ENCODE measurements at regions of chr10 and their contacts with region 1.

Region 1: DNA sequence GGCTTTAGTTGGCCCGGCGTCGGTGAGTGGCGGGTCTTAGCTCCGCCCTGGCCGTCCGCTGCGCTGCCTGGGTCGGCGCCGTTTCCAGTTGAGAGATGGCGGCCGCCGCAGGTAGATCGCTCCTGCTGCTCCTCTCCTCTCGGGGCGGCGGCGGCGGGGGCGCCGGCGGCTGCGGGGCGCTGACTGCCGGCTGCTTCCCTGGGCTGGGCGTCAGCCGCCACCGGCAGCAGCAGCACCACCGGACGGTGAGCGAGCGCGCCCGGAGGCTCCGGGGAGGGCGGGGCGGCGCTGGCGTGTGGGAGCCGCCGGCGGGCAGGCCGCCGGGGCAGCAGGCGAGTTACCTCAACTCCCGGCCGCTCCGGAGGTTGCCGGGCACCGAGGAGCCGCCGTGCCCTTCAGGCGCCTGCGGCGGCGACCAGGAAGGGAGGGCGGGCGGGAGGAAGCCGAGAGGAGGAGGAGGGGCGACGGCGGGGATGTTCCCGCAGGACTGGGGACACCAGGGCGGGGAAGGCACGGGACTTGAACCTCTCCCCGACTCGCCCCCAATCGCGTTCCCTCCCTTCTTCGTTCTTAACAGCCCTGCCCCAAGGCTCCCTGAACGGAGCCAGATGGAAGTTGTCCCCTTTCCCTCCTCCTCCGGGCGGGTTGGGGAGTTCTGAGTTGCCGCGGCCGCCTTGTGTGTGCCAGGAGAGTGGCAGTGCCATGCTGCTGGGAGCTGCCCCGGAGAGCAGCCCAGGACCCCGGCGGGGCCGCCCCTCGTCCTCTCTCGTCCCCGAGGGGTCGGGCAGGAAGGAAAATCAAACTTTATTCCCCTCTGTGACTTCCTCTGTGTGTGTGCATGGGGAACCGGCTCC is at the start of gene MCU:
- DNase-seq: no peak
- ATAC-seq: peak; percentile 98
- H3K4me3 ChIP-seq: peak within 1 kb of the TSS; percentile 82 to 87
- H3K27ac ChIP-seq: peak within 1 kb of the TSS; percentile 66; the same call in 1 of the 2 replicates
- H3K4me1 ChIP-seq: peaks cover 3 to 24% of the 10 kb centered on the region in 2 experiments; a peak in 3 of 4 replicates
- H3K27me3 ChIP-seq: no peaks in the 10 kb centered on the region
- CTCF ChIP-seq: no peak
- POLR2A ChIP-seq: peak; percentile 68
- RAD21 ChIP-seq: no peak
- total RNA-seq, gene MCU: 26.8 TPM

Region 2: GRCh38 chr10:71817831-71818655 is 874.2 kb before region 1 on chr10:
- CTCF ChIA-PET with region 1: no interaction called
- POLR2A ChIA-PET with region 1: no interaction called
- RAD21 ChIA-PET with region 1: no interaction called
- intact Hi-C with region 1: no loop called
- DNase-seq: no peak
- ATAC-seq: no peak
- H3K4me3 ChIP-seq: no peak overlapping the region
- H3K27ac ChIP-seq: no peak overlapping the region
- H3K4me1 ChIP-seq: no peaks in the 10 kb centered on the region; a peak in 1 of 4 replicates
- H3K27me3 ChIP-seq: no peaks in the 10 kb centered on the region
- CTCF ChIP-seq: no peak
- POLR2A ChIP-seq: no peak
- RAD21 ChIP-seq: no peak

Region 3: DNA sequence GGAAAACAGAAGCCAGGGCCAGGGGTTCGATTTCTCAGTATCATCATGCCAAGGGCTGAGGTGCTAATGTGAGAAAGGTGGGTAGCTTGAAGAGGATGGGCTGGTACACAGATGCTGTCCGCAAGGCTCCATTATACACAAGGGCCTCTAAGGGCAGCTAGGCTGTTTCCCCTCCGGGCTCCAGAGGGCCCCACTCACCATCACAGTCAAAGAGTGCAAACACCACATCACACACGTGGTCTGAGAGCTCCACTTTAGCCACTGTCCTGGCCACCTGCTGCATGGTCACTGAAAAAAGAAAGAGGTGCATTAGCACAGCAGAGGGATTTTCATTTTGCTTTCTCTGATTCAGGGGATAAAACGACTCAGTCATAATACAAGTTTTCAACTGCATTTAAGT is 316.7 kb before region 1 on chr10:
- CTCF ChIA-PET with region 1: interaction called, 4 read pairs
- POLR2A ChIA-PET with region 1: no interaction called
- RAD21 ChIA-PET with region 1: no interaction called
- intact Hi-C with region 1: loop called (anchors 5 kb)
- DNase-seq: no peak
- ATAC-seq: peak; percentile 97
- H3K4me3 ChIP-seq: no peak overlapping the region
- H3K27ac ChIP-seq: no peak overlapping the region
- H3K4me1 ChIP-seq: no peaks in the 10 kb centered on the region
- H3K27me3 ChIP-seq: no peaks in the 10 kb centered on the region
- CTCF ChIP-seq: peak; percentile 20 to 38 (median 32); a peak in 3 of 6 replicates
- POLR2A ChIP-seq: no peak
- RAD21 ChIP-seq: peak; percentile 62

Region 4: DNA sequence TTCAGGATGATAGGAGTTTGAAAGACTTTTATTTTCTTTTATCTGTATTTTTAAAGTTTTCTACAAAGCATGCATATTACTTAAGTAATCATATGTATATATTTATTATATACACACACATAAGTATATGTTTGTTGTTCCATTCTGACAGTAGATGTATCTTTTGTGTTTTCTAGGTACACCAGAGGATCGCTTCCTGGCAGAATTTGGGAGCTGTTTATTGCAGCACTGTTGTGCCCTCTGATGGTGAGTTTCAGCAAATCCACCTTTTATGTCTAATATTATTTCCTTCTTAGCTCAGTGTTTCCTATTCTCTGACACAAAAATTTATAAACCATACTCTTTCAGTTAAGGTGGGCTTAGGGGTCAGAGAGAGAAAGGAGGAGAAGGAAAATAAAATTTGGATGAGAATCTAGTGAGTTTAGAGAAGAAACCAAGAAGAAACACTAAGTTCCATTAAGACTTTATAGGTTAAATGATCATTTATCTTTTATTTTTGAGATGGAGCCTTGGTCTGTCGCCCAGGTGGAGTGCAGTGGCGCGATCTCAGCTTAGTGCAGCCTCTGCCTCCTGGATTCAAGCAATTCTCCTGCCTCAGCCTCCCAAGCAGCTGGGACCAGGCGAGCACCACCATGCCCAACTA is 142.0 kb after region 1 on chr10:
- CTCF ChIA-PET with region 1: interaction called, 15 read pairs
- POLR2A ChIA-PET with region 1: interaction called, 3 read pairs
- RAD21 ChIA-PET with region 1: interaction called, 3 read pairs
- intact Hi-C with region 1: loop called (anchors 1 kb)
- DNase-seq: peak; percentile 48
- ATAC-seq: peak; percentile 71
- H3K4me3 ChIP-seq: no peak overlapping the region
- H3K27ac ChIP-seq: no peak overlapping the region
- H3K4me1 ChIP-seq: no peaks in the 10 kb centered on the region
- H3K27me3 ChIP-seq: no peaks in the 10 kb centered on the region
- CTCF ChIP-seq: peak; percentile 52 to 83 (median 65)
- POLR2A ChIP-seq: no peak
- RAD21 ChIP-seq: peak; percentile 90

Region 5: DNA sequence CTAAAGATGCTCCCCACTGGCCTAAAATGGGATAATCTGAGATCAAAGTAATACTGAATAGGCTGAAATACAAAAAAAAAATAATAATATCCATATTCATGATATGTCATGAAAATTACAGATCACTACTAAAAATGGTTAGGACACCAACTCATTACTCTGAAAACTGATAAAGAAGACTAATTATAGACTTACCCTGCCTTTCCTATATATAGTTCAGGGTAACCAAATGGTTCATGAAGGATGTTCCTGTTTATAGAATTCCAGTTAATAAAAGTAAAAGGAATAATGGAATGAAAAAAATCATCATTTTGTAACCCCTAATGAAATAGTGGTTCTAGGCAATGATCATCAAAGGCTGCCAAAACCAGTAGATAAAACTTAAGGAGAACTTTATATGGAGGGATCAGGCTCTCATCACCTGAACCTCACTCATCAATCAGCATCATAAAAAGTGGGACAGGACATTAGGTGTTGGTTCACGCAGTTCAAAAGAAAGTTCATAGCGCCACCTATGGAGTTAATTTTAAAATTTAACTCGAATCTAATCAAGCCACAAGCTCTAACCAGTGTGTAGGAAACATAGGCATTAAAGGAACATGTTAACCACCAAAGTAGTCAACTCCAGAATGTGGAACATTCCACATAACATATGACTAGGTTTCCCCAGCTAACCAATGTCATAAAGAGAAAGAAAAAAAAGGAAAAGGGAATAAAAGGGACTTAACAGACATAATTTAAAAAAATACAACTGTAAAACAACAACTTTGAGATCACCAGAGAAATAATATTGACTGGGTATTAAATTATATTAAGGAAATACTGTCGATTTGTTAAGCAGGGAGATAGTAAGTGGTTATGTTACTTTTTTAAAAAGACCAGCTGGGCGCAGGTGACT is 368.7 kb after region 1 on chr10:
- CTCF ChIA-PET with region 1: no interaction called
- POLR2A ChIA-PET with region 1: no interaction called
- RAD21 ChIA-PET with region 1: no interaction called
- intact Hi-C with region 1: loop called (anchors 10 kb)
- DNase-seq: peak; percentile 19
- ATAC-seq: peak; percentile 84
- H3K4me3 ChIP-seq: no peak overlapping the region
- H3K27ac ChIP-seq: no peak overlapping the region
- H3K4me1 ChIP-seq: no peaks in the 10 kb centered on the region
- H3K27me3 ChIP-seq: no peaks in the 10 kb centered on the region
- CTCF ChIP-seq: peak in 2 of 3 experiments; percentile 29 to 68; a peak in 3 of 6 replicates
- POLR2A ChIP-seq: no peak
- RAD21 ChIP-seq: peak; percentile 61